ENCODE measurements at regions of chr1 and their contacts with region 1.

Region 1: GRCh38 chr1:222455188-222455879 is 92.6 kb downstream of the HHIPL2 start:
- DNase-seq: peak; percentile 97
- H3K4me3 Mint-ChIP-seq: peak overlapping the region; percentile 37
- H3K27ac Mint-ChIP-seq: peak overlapping the region; percentile 54
- H3K4me1 Mint-ChIP-seq: peaks cover 16% of the 10 kb centered on the region
- H3K27me3 Mint-ChIP-seq: no peaks in the 10 kb centered on the region
- CTCF ChIP-seq: peak; percentile 100

Region 2: GRCh38 chr1:221203224-221204054 is 1251.9 kb before region 1 on chr1:
- CTCF ChIA-PET with region 1: interaction called, 5 read pairs
- POLR2A ChIA-PET with region 1: no interaction called
- intact Hi-C with region 1: loop called (anchors 10 kb)
- DNase-seq: peak; percentile 94
- H3K4me3 Mint-ChIP-seq: no peak overlapping the region
- H3K27ac Mint-ChIP-seq: no peak overlapping the region
- H3K4me1 Mint-ChIP-seq: peaks cover 6% of the 10 kb centered on the region
- H3K27me3 Mint-ChIP-seq: no peaks in the 10 kb centered on the region
- CTCF ChIP-seq: peak; percentile 99

Region 3: GRCh38 chr1:221548942-221549341 is 906.4 kb before region 1 on chr1:
- CTCF ChIA-PET with region 1: interaction called, 35 read pairs
- POLR2A ChIA-PET with region 1: no interaction called
- intact Hi-C with region 1: no loop called
- DNase-seq: no peak
- H3K4me3 Mint-ChIP-seq: no peak overlapping the region
- H3K27ac Mint-ChIP-seq: no peak overlapping the region
- H3K4me1 Mint-ChIP-seq: peaks cover under 1% of the 10 kb centered on the region
- H3K27me3 Mint-ChIP-seq: no peaks in the 10 kb centered on the region
- CTCF ChIP-seq: no peak

Region 4: GRCh38 chr1:222018041-222018440 is 437.3 kb before region 1 on chr1:
- CTCF ChIA-PET with region 1: interaction called, 18 read pairs
- POLR2A ChIA-PET with region 1: no interaction called
- intact Hi-C with region 1: no loop called
- DNase-seq: no peak
- H3K4me3 Mint-ChIP-seq: no peak overlapping the region
- H3K27ac Mint-ChIP-seq: no peak overlapping the region
- H3K4me1 Mint-ChIP-seq: no peaks in the 10 kb centered on the region
- H3K27me3 Mint-ChIP-seq: no peaks in the 10 kb centered on the region
- CTCF ChIP-seq: no peak

Region 5: DNA sequence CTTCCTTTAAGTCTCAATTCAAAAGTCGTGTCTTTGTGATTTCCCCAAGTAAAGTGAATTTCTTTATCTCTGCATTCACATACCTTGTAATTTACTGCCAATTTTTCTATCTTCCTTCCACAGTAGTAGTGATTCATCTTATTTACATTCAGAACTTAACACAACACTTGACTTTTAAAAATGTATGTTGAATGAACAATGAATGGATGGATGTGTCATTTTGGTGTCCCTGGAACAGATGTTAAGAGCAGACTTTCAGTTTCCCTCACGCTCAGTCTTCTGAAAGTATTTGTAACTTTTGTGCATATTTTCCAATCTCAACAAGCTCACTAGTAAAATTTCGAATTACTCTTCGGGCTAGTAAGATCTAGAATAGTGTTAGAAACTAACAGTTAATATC is 259.5 kb before region 1 on chr1:
- CTCF ChIA-PET with region 1: interaction called, 12 read pairs
- POLR2A ChIA-PET with region 1: no interaction called
- intact Hi-C with region 1: no loop called
- DNase-seq: no peak
- H3K4me3 Mint-ChIP-seq: no peak overlapping the region
- H3K27ac Mint-ChIP-seq: no peak overlapping the region
- H3K4me1 Mint-ChIP-seq: no peaks in the 10 kb centered on the region
- H3K27me3 Mint-ChIP-seq: no peaks in the 10 kb centered on the region
- CTCF ChIP-seq: no peak

Region 6: DNA sequence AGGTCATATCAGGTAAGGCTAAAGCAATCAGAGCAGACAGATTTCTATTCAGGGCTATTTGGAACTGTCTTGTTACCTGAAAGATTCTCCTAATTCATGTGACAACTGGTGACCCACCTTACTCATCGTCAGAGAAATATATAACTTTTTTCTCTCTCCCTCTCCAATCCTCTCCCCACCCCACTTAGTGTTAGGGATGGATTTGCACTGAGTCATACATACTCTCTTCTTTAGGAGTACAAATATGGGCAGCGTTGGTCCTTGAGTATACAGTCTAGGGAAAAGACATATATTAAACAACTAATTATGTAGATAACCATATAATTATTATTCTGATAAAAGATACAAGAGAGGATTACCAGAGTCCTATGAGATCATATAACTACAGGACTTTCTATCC is 153.7 kb before region 1 on chr1:
- CTCF ChIA-PET with region 1: interaction called, 15 read pairs
- POLR2A ChIA-PET with region 1: no interaction called
- intact Hi-C with region 1: no loop called
- DNase-seq: no peak
- H3K4me3 Mint-ChIP-seq: no peak overlapping the region
- H3K27ac Mint-ChIP-seq: no peak overlapping the region
- H3K4me1 Mint-ChIP-seq: peaks cover 4% of the 10 kb centered on the region
- H3K27me3 Mint-ChIP-seq: no peaks in the 10 kb centered on the region
- CTCF ChIP-seq: no peak

Region 7: GRCh38 chr1:222634180-222635013 is 179.1 kb after region 1 on chr1:
- CTCF ChIA-PET with region 1: interaction called, 11 read pairs
- POLR2A ChIA-PET with region 1: interaction called, 3 read pairs
- intact Hi-C with region 1: no loop called
- DNase-seq: peak; percentile 97
- H3K4me3 Mint-ChIP-seq: no peak overlapping the region
- H3K27ac Mint-ChIP-seq: peak overlapping the region; percentile 55
- H3K4me1 Mint-ChIP-seq: peaks cover 6% of the 10 kb centered on the region
- H3K27me3 Mint-ChIP-seq: no peaks in the 10 kb centered on the region
- CTCF ChIP-seq: peak; percentile 97

Measured in MCF 10A (cell line).